H1 (cell line): ENCODE measurements at regions of chr10 and their contacts with region 1.

Region 1: GRCh38 chr10:70903262-70903921 is 15.0 kb upstream of the PCBD1 start:
- DNase-seq: peak in 1 of 2 experiments; percentile 93
- H3K4me3 ChIP-seq: no peak overlapping the region
- H3K27ac ChIP-seq: no peak overlapping the region
- H3K4me1 ChIP-seq: no peaks in the 10 kb centered on the region; a peak in 1 of 7 replicates
- H3K27me3 ChIP-seq: no peaks in the 10 kb centered on the region
- CTCF ChIP-seq: peak; percentile 92 to 99 (median 97)
- EP300 ChIP-seq: no peak
- POLR2A ChIP-seq: no peak
- RAD21 ChIP-seq: peak; percentile 96 to 99

Region 2: GRCh38 chr10:70935631-70936030 is 32.2 kb after region 1 on chr10:
- CTCF ChIA-PET with region 1: interaction called, 13 read pairs
- POLR2A ChIA-PET with region 1: no interaction called
- DNase-seq: no peak
- H3K4me3 ChIP-seq: no peak overlapping the region
- H3K27ac ChIP-seq: no peak overlapping the region
- H3K4me1 ChIP-seq: no peaks in the 10 kb centered on the region
- H3K27me3 ChIP-seq: no peaks in the 10 kb centered on the region; a peak in 1 of 7 replicates
- CTCF ChIP-seq: no peak
- EP300 ChIP-seq: no peak
- POLR2A ChIP-seq: no peak
- RAD21 ChIP-seq: no peak

Region 3: DNA sequence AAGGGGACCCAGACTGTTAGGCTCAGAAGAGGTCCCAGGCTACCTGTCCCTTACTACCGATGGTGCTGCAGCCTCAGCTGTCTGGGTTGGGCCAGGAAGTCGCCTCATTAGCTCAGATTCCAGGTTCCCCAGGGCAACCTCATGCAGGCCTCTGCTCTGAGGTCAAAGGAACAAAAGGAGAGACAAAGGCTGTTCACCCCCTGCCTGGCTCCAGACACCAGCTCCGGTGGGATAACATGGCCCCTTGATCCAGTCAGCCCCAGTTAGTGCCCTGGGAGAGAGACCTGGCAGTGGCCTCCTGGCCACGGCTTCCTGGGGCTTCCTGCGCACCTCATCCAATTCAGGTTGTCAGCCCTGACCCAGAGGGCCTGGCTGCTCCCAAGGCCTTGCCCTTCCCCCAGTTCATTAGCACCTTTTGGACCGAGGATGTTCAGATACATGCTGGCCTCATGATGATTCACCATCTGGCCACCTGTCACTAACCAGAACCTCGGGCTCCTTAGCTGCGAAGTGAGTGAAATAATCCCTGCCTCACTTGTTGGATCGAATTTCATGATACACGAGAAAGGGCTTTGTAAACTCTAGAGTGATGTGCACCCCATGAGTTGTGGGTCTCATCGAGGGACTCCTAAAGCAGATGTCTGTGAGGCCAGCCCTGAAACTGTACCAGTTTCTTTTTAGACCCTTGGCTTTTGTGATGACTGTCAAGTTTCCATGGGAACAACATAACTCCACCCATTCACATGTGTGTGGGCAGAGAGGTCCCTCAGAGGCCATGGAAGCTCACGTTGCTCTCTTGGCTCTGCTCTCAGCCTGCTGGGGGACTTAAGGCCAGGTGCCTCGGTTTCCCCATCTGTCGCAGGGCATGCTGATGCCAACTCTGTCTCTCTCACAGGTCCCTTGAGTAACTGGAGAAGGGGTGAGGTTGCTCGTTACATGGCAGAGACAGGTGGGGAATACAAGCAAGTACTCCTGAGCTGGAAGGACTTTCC is 64.5 kb after region 1 on chr10:
- CTCF ChIA-PET with region 1: interaction called, 14 read pairs
- POLR2A ChIA-PET with region 1: no interaction called
- DNase-seq: no peak
- H3K4me3 ChIP-seq: no peak overlapping the region
- H3K27ac ChIP-seq: no peak overlapping the region
- H3K4me1 ChIP-seq: peaks cover 6 to 10% (median 8%) of the 10 kb centered on the region in 4 experiments; a peak in 6 of 7 replicates
- H3K27me3 ChIP-seq: peaks cover 0 to 8% (median under 1%) of the 10 kb centered on the region in 4 experiments; a peak in 1 of 7 replicates
- CTCF ChIP-seq: no peak
- EP300 ChIP-seq: no peak
- POLR2A ChIP-seq: no peak
- RAD21 ChIP-seq: no peak

Region 4: DNA sequence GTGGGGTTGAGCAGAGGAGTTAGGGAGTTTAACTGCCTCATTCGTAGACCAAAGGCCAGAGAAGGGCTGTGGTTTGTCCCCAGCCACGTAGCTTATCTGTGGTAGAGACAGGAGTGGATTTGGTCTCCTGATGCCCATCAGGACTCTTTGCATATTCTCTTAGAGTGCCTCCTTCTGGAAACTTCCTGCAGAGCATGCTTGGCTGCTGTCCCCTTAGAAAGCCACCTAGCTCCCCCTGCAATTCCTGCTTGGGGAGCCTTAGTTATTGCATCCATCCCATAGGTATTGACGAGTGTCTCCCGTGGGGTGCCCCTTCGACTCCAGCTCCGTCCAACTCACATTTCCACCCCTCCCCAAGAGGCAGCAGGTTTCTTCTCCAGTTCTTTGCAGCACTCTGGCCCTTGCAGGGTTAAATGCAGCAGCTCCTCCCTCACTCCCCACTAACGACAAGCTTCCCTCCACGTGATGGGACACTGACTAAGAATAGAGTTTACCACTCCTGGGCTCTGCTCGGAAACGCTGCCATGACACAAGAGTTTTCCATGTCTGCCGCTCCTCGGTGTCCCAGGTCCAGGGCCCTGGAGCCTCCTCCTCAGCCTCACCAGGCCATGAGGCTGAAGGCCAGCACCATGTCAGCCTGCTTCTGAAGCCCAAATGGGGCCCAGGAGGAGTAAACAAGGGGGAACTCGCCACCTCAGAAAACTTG is 161.2 kb after region 1 on chr10:
- CTCF ChIA-PET with region 1: interaction called, 19 read pairs
- POLR2A ChIA-PET with region 1: interaction called, 3 read pairs
- DNase-seq: no peak
- H3K4me3 ChIP-seq: no peak overlapping the region
- H3K27ac ChIP-seq: no peak overlapping the region
- H3K4me1 ChIP-seq: peaks cover 0 to 9% (median 3%) of the 10 kb centered on the region in 4 experiments; a peak in 5 of 7 replicates
- H3K27me3 ChIP-seq: no peaks in the 10 kb centered on the region
- CTCF ChIP-seq: peak; percentile 3 to 57 (median 53)
- EP300 ChIP-seq: no peak
- POLR2A ChIP-seq: no peak
- RAD21 ChIP-seq: peak; percentile 34 to 52

Region 5: GRCh38 chr10:71270301-71271220 is 367.2 kb after region 1 on chr10:
- CTCF ChIA-PET with region 1: interaction called, 12 read pairs
- POLR2A ChIA-PET with region 1: no interaction called
- DNase-seq: peak; percentile 47 to 75
- H3K4me3 ChIP-seq: peak overlapping the region in 1 of 4 experiments; percentile 18; a peak in 1 of 8 replicates
- H3K27ac ChIP-seq: no peak overlapping the region; the same call in 1 of the 2 replicates
- H3K4me1 ChIP-seq: peaks cover 5 to 41% (median 30%) of the 10 kb centered on the region in 4 experiments
- H3K27me3 ChIP-seq: no peaks in the 10 kb centered on the region
- CTCF ChIP-seq: peak; percentile 46 to 68 (median 66)
- EP300 ChIP-seq: no peak
- POLR2A ChIP-seq: no peak
- RAD21 ChIP-seq: peak; percentile 49 to 66